ENCODE measurements at regions of chr11 and their contacts with region 1.

Region 1: DNA sequence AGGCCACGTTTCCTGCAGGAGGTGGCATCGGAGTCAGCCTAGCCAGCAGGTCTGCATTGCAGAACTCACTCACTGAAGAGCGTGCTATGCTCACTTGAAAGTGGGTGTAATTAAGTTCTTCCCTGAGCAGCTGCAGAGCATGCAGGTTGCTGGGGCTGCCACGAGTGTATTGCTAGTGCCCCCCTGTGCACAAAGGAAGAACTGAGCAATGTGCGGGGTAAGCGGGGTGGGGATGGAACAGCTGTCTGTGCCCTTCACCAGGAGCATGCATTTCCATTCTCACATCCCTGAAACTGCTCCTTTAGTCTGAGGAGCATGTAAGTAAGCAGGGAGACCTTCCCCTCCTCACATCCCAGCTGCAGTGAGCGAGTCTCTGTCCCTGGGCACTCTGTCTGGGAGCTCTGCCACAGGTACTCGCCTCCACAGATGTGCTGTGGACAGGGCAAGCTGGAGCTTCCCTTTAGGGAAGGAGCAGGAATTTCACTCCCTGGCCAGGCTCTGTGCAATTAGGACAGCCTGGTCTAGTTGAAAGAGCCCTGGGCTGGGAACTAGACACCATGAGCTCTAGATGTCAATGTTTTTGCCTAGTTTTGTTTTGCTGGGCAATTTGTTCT is 1031.8 kb downstream of the NTM start:
- DNase-seq: no peak
- ATAC-seq: peak; percentile 56

Region 2: GRCh38 chr11:132114185-132114584 is 288.0 kb before region 1 on chr11:
- intact Hi-C with region 1: loop called (anchors 2 kb)
- DNase-seq: no peak
- ATAC-seq: no peak

Region 3: DNA sequence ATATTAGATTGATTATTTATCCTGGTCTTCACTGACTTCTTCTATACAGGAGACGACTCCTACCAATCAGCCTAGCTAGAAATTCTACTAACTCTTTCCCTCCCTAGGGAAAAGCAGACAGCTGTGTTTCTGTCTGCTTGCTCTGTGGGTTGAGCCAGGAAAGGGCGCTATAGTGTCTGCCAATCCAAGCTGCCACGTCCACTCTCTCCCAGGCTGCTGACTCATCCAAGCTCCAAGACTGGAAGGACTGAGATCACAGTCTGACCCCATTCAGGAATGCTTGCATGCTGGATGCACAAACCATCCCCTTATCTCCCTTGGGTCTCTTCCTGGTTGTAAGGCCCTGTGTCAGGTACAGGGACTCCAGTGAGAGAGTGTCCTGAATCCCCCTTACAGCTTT is 174.5 kb after region 1 on chr11:
- intact Hi-C with region 1: no loop called
- DNase-seq: no peak
- ATAC-seq: no peak

Measured in Right ventricle myocardium inferior (tissue), 1 donor.